ENCODE measurements at regions of chr3 and their contacts with region 1.

Region 1: GRCh38 chr3:121660356-121661171 is at the start of gene HCLS1:
- DNase-seq: peak; percentile 80
- H3K4me3 Mint-ChIP-seq: peak within 1 kb of the TSS; percentile 88
- H3K27ac Mint-ChIP-seq: peak within 1 kb of the TSS; percentile 96
- H3K4me1 Mint-ChIP-seq: peaks cover 53% of the 10 kb centered on the region
- H3K27me3 Mint-ChIP-seq: no peaks in the 10 kb centered on the region
- total RNA-seq, gene HCLS1: 380 to 382 TPM

Region 2: DNA sequence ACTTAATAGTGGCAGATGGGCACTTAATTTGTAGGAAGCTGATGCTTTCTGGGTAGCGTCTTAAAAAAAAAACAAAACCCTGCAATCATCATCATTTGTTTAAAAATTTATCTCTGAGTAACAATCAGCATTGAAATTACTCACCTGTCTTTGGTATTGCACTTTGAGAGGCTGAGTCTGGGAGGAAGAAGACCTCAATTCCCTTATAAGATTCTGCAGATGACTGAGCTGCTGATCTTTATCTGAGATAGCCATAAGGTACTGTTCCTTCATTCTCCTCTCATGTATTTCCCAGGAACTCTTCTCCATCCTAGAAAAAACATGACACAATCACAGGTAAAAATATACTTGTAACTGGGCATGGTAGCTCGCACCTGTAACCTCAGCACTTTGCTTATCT is 16.6 kb after region 1 on chr3:
- CTCF ChIA-PET with region 1: interaction called, 3 read pairs
- POLR2A ChIA-PET with region 1: interaction called, 17 read pairs
- DNase-seq: no peak
- H3K4me3 Mint-ChIP-seq: no peak overlapping the region
- H3K27ac Mint-ChIP-seq: no peak overlapping the region
- H3K4me1 Mint-ChIP-seq: peaks cover 11% of the 10 kb centered on the region
- H3K27me3 Mint-ChIP-seq: no peaks in the 10 kb centered on the region

Region 3: DNA sequence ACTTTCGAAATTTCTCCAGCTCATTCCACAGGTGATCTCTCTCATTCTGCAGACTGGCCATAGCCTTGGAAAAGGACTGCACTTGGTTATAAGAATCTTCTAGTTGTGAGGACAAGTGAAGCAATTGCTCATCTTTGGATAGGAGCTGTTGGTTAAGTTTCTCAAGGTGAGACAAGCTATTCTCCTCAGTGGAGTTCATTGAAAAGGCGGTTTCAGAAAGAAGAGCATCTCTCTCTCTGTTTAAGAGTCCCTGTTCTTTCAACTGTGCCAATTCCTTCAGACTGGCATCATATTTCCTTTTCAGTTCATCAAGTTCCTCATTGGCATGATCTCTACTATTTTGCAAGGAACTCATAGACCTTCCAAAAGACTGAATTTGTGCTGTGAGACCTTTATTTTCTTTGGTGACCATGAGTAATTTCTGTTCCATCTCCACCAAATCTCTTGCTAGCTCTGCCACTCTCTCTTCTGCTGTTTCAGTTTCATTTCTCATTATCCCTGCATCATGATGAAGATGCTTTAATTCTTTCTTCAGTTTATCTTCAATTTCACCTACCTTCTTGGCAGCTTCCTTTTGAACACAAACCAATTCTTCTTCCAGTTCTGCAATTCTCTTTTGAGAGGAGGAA is 30.3 kb after region 1 on chr3:
- CTCF ChIA-PET with region 1: no interaction called
- POLR2A ChIA-PET with region 1: interaction called, 32 read pairs
- DNase-seq: no peak
- H3K4me3 Mint-ChIP-seq: peak overlapping the region; percentile 25
- H3K27ac Mint-ChIP-seq: peak overlapping the region; percentile 66
- H3K4me1 Mint-ChIP-seq: peaks cover 19% of the 10 kb centered on the region
- H3K27me3 Mint-ChIP-seq: no peaks in the 10 kb centered on the region

Region 4: GRCh38 chr3:121749276-121750086 is 88.9 kb after region 1 on chr3 and contains the start of gene GOLGB1:
- CTCF ChIA-PET with region 1: interaction called, 3 read pairs
- POLR2A ChIA-PET with region 1: interaction called, 45 read pairs
- DNase-seq: peak; percentile 96
- H3K4me3 Mint-ChIP-seq: no peak within 1 kb of the TSS
- H3K27ac Mint-ChIP-seq: no peak within 1 kb of the TSS
- H3K4me1 Mint-ChIP-seq: peaks cover 5% of the 10 kb centered on the region
- H3K27me3 Mint-ChIP-seq: peaks cover 11% of the 10 kb centered on the region
- total RNA-seq, gene GOLGB1: 33.6 to 37.8 TPM

Region 5: DNA sequence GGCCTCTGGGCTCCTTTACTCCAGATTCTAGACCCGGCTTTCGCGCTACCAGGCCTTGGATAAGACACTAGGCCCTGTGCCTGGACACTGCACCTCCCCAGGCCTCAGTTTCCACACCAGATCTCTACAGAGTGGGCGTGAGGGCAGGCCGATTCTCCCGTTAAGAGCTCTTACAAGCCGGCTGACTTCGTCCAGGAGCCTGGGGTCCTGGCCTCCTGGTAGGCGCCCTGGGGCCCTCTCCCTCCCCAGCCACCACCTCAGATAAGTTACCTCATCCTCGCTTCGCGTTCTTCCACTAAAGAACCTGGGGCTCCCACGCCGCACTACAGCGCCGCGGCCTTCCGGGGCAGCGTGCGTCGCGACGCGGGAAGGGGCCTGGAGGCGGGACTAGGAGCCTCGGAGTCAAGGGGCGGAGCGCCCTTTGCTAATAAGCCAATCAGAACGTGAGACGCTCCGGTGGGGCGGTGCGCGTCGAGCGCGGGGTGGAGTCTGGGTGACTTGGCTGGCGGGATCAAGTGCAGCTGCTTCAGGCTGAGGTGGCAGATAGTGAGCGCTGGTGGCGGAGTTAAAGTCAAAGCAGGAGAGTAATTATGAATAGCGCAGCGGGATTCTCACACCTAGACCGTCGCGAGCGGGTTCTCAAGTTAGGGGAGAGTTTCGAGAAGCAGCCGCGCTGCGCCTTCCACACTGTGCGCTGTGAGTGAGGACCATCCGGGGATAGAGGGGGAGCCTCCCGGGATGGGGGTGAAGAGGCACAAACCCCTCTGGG is 174.3 kb after region 1 on chr3 and contains the starts of genes EAF2 and IQCB1:
- CTCF ChIA-PET with region 1: no interaction called
- POLR2A ChIA-PET with region 1: interaction called, 15 read pairs
- DNase-seq: peak; percentile 97
- H3K4me3 Mint-ChIP-seq: peak within 1 kb of the TSS; percentile 83
- H3K27ac Mint-ChIP-seq: peak within 1 kb of the TSS; percentile 76
- H3K4me1 Mint-ChIP-seq: peaks cover 55% of the 10 kb centered on the region
- H3K27me3 Mint-ChIP-seq: no peaks in the 10 kb centered on the region
- total RNA-seq, gene EAF2: 21.4 to 23.7 TPM
- total RNA-seq, gene IQCB1: 35.3 to 39.1 TPM

Measured in activated CD4-positive, alpha-beta memory T cell treated with anti-CD3 and anti-CD28 coated beads, Interleukin-2, amount 10 ng/mL, durations not matched to agents 7 days and 5 days (primary cell).